Activated CD8-positive, alpha-beta memory T cell treated with anti-CD3 and anti-CD28 coated beads, Interleukin-2, amount 10 ng/mL, durations not matched to agents 7 days and 5 days (primary cell): ENCODE measurements at regions of chr2 and their contacts with region 1.

Region 1: GRCh38 chr2:64523666-64524603 is at the start of gene AFTPH:
- DNase-seq: peak; percentile 100
- ATAC-seq: peak; percentile 92
- H3K4me3 Mint-ChIP-seq: peak within 1 kb of the TSS; percentile 91
- H3K27ac Mint-ChIP-seq: peak within 1 kb of the TSS; percentile 99
- H3K4me1 Mint-ChIP-seq: peaks cover 38% of the 10 kb centered on the region
- H3K27me3 Mint-ChIP-seq: peaks cover 3% of the 10 kb centered on the region
- total RNA-seq, gene AFTPH: 32.9 to 43.5 TPM

Region 2: GRCh38 chr2:63553049-63553448 is 970.9 kb before region 1 on chr2:
- CTCF ChIA-PET with region 1: no interaction called
- DNase-seq: no peak
- ATAC-seq: no peak
- H3K4me3 Mint-ChIP-seq: no peak overlapping the region
- H3K27ac Mint-ChIP-seq: no peak overlapping the region
- H3K4me1 Mint-ChIP-seq: peaks cover 2% of the 10 kb centered on the region
- H3K27me3 Mint-ChIP-seq: no peaks in the 10 kb centered on the region

Region 3: DNA sequence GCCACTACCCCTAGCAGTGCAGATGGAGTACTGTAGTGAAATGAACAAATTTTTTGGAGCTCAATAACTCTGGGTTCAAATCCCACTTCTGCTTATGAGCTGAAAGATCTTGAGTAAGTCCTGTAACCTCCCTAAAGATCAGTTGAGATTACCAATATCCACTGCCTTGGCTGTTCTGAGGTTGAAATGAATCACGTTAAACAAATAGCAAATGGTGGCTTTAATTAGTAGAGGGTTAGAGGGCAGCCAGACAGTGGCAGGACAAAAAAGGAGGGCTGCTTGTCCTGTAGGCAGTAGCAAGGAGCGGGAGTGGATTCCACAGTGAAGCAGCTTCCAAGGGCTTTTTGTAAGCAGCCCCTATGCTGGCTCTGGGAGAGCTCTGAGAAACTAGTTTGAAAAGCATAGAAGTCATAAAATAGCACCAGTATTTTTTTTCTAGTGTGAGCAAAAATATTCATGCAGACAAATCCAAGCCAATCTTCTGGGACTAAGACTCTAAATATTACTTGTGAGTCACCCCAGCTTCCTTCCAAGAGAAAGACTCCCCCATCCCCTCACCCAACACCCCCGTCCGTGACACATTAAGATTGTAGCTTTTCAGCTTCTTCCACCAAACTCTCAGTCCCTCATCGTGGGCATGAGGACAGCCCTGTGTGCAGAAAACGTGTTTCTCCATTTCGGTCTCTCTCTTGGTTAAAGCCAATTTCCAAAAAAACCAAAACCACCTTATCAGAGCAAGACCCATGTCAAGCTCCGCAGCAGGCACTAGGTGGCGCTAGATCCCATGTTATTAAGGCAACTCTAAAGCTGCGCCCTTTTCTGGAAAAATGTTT is 193.4 kb before region 1 on chr2:
- CTCF ChIA-PET with region 1: interaction called, 27 read pairs
- DNase-seq: peak; percentile 84
- ATAC-seq: peak; percentile 20
- H3K4me3 Mint-ChIP-seq: peak overlapping the region; percentile 25
- H3K27ac Mint-ChIP-seq: peak overlapping the region; percentile 37
- H3K4me1 Mint-ChIP-seq: peaks cover 47% of the 10 kb centered on the region
- H3K27me3 Mint-ChIP-seq: peaks cover 9% of the 10 kb centered on the region

Region 4: DNA sequence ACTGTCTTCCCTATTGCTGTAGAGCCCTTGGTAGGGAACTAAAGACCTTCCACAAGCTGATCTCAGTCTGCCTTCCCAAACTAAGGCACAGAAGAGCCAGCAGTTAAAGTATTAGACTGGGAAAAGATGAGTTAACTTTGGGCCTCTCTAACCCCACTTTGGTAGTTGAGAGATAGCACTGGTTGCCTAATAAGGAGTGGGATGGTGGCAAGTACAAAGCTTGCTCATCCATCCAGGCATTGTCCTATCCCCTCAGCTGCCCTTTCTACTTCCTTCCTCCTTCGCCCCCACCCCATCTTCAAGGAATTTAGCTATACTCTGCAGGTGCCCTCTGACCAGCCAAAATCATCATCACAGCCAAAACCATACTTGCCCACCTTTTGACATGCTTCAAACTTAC is 22.0 kb before region 1 on chr2:
- CTCF ChIA-PET with region 1: interaction called, 10 read pairs
- DNase-seq: no peak
- ATAC-seq: no peak
- H3K4me3 Mint-ChIP-seq: no peak overlapping the region
- H3K27ac Mint-ChIP-seq: no peak overlapping the region
- H3K4me1 Mint-ChIP-seq: peaks cover 27% of the 10 kb centered on the region
- H3K27me3 Mint-ChIP-seq: peaks cover 16% of the 10 kb centered on the region

Region 5: GRCh38 chr2:64562148-64562784 is 38.3 kb after region 1 on chr2:
- CTCF ChIA-PET with region 1: interaction called, 85 read pairs
- DNase-seq: no peak
- ATAC-seq: peak; percentile 69
- H3K4me3 Mint-ChIP-seq: no peak overlapping the region
- H3K27ac Mint-ChIP-seq: peak overlapping the region; percentile 42
- H3K4me1 Mint-ChIP-seq: peaks cover 36% of the 10 kb centered on the region
- H3K27me3 Mint-ChIP-seq: no peaks in the 10 kb centered on the region

Region 6: GRCh38 chr2:64609227-64609941 is 85.4 kb after region 1 on chr2:
- CTCF ChIA-PET with region 1: interaction called, 35 read pairs
- DNase-seq: peak; percentile 75
- ATAC-seq: peak; percentile 75
- H3K4me3 Mint-ChIP-seq: peak overlapping the region; percentile 64
- H3K27ac Mint-ChIP-seq: no peak overlapping the region
- H3K4me1 Mint-ChIP-seq: peaks cover 26% of the 10 kb centered on the region
- H3K27me3 Mint-ChIP-seq: peaks cover 14% of the 10 kb centered on the region

Region 7: GRCh38 chr2:64653349-64654062 is 129.6 kb after region 1 on chr2 and contains the start of gene SERTAD2:
- CTCF ChIA-PET with region 1: interaction called, 11 read pairs
- DNase-seq: peak; percentile 88
- ATAC-seq: peak; percentile 89
- H3K4me3 Mint-ChIP-seq: peak within 1 kb of the TSS; percentile 83
- H3K27ac Mint-ChIP-seq: peak within 1 kb of the TSS; percentile 91
- H3K4me1 Mint-ChIP-seq: peaks cover 53% of the 10 kb centered on the region
- H3K27me3 Mint-ChIP-seq: no peaks in the 10 kb centered on the region
- total RNA-seq, gene SERTAD2: 24.3 to 53.7 TPM

Region 8: GRCh38 chr2:64873472-64873924 is 349.6 kb after region 1 on chr2:
- CTCF ChIA-PET with region 1: interaction called, 17 read pairs
- DNase-seq: peak; percentile 85
- ATAC-seq: peak; percentile 98
- H3K4me3 Mint-ChIP-seq: peak overlapping the region; percentile 33
- H3K27ac Mint-ChIP-seq: no peak overlapping the region
- H3K4me1 Mint-ChIP-seq: peaks cover 6% of the 10 kb centered on the region
- H3K27me3 Mint-ChIP-seq: peaks cover 11% of the 10 kb centered on the region